ENCODE measurements at regions of chr1 and their contacts with region 1.

Region 1: GRCh38 chr1:245380790-245381535 is 226.2 kb downstream of the KIF26B start:
- DNase-seq: no peak
- ATAC-seq: no peak
- H3K4me3 ChIP-seq: no peak overlapping the region
- H3K27ac ChIP-seq: no peak overlapping the region
- H3K4me1 ChIP-seq: no peaks in the 10 kb centered on the region
- H3K27me3 ChIP-seq: peaks cover 0 to 2% of the 10 kb centered on the region in 2 experiments; a peak in 2 of 4 replicates
- CTCF ChIP-seq: peak in 2 of 3 experiments; percentile 10 to 24; a peak in 1 of 6 replicates
- EP300 ChIP-seq: no peak
- POLR2A ChIP-seq: no peak
- RAD21 ChIP-seq: 0 out of 2 replicates have a peak, but pooled peaks have one; percentile 25

Region 2: GRCh38 chr1:245418077-245418476 is 37.1 kb after region 1 on chr1:
- CTCF ChIA-PET with region 1: no interaction called
- POLR2A ChIA-PET with region 1: no interaction called
- RAD21 ChIA-PET with region 1: no interaction called
- SMC1A ChIA-PET with region 1: interaction called, 3 read pairs
- in situ Hi-C with region 1: no loop called
- intact Hi-C with region 1: loop called (anchors 1 kb)
- DNase-seq: no peak
- ATAC-seq: no peak
- H3K4me3 ChIP-seq: no peak overlapping the region
- H3K27ac ChIP-seq: no peak overlapping the region
- H3K4me1 ChIP-seq: no peaks in the 10 kb centered on the region
- H3K27me3 ChIP-seq: peaks cover 0 to 3% of the 10 kb centered on the region in 2 experiments; a peak in 3 of 4 replicates
- CTCF ChIP-seq: no peak
- EP300 ChIP-seq: no peak
- POLR2A ChIP-seq: no peak
- RAD21 ChIP-seq: no peak

Measured in GM12878 (cell line).